A673 (cell line): ENCODE measurements at regions of chr6 and their contacts with region 1.

Region 1: DNA sequence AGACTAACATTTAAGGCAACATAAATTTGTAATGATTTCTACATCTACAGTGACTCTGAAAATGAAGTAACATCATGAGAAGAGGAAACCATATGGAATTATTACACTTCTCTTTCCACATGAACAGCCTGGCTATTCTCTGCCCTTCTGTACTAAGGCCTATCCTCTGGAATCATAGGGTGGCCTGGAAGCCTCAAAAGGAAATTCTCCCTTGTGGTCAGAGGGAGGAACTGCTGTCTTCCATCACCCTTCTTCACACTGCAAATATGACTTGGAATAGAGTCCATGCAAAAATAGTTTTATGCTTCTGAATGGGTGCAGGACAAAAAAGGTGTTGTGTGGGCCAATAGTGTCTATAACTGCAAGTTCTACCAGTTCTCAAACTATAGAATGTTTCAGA is 44.6 kb upstream of the SH3BGRL2 start:
- DNase-seq: peak; percentile 59
- H3K4me3 ChIP-seq: no peak overlapping the region
- H3K27ac ChIP-seq: no peak overlapping the region
- H3K4me1 ChIP-seq: no peaks in the 10 kb centered on the region
- H3K27me3 ChIP-seq: no peaks in the 10 kb centered on the region
- CTCF ChIP-seq: peak; percentile 53

Region 2: GRCh38 chr6:79610306-79610999 is 23.9 kb after region 1 on chr6:
- CTCF ChIA-PET with region 1: no interaction called
- POLR2A ChIA-PET with region 1: no interaction called
- intact Hi-C with region 1: loop called (anchors 1 kb)
- DNase-seq: no peak
- H3K4me3 ChIP-seq: no peak overlapping the region
- H3K27ac ChIP-seq: no peak overlapping the region
- H3K4me1 ChIP-seq: no peaks in the 10 kb centered on the region
- H3K27me3 ChIP-seq: no peaks in the 10 kb centered on the region
- CTCF ChIP-seq: no peak

Region 3: GRCh38 chr6:80133020-80133419 is 546.5 kb after region 1 on chr6:
- CTCF ChIA-PET with region 1: no interaction called
- POLR2A ChIA-PET with region 1: no interaction called
- intact Hi-C with region 1: no loop called
- DNase-seq: peak; percentile 87
- H3K4me3 ChIP-seq: no peak overlapping the region
- H3K27ac ChIP-seq: no peak overlapping the region
- H3K4me1 ChIP-seq: peaks cover 5% of the 10 kb centered on the region
- H3K27me3 ChIP-seq: no peaks in the 10 kb centered on the region
- CTCF ChIP-seq: peak; percentile 72